ENCODE measurements at regions of chr22 and their contacts with region 1.

Region 1: DNA sequence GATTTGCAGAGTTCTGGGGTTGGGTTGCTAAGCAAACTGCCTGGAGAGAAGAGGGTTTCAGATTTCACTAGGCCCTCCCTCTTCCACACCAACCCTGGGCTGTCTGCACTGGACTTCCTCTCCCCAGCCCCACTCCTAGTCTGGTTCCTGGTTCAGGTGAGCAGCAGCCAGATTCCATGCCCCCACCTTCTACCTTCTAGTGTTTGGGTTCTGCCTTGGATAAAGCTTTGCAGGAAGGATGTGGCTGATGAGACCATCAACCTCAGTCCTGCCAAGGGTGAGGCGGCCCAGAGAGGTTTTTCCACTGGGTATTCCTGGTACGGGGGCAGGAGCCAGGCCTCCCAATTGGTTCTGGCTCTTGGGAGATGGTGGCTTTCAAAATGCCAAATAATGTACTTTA is 68.3 kb downstream of the BCR start:
- DNase-seq: peak; percentile 53
- ATAC-seq: peak; percentile 64
- H3K4me3 ChIP-seq: no peak overlapping the region
- H3K27ac ChIP-seq: no peak overlapping the region
- H3K4me1 ChIP-seq: peaks cover 85% of the 10 kb centered on the region
- H3K27me3 ChIP-seq: no peaks in the 10 kb centered on the region
- CTCF ChIP-seq: no peak
- EP300 ChIP-seq: no peak
- POLR2A ChIP-seq: no peak
- RAD21 ChIP-seq: no peak

Region 2: DNA sequence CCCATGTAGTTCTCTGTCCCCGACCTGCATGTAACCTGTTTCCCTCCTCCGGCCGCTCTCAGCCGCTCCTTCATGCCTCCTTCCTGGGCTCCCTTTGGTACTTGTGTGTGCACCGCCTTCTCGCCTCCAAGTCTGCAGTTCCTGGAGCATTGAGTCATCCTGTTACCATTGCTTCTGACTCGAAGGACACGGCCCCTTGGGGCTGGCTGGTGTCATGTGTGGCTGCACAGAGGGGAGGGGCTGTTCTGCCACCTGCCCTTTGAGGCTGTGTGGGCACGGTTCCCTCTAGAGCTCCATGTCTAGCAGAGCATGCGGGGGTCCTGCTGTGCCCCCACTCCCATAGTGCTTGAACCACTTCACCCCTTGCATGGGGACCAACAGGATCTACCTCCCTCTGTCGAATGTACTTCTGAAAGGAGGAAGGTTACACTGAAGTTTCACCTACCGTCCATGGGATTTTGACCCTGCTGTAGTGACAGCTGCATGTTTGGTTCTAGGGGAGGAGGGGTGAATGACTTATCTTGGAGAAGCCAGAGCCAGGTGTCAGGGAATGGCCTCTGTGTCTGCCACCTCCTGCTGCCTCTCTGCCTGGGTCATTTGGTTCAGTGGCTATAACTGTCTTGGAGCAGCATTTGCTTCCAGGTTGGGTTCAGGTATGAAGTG is 28.6 kb before region 1 on chr22:
- CTCF ChIA-PET with region 1: no interaction called
- POLR2A ChIA-PET with region 1: no interaction called
- in situ Hi-C with region 1: no loop called
- intact Hi-C with region 1: loop called (anchors 5 kb)
- DNase-seq: no peak
- ATAC-seq: no peak
- H3K4me3 ChIP-seq: no peak overlapping the region
- H3K27ac ChIP-seq: no peak overlapping the region
- H3K4me1 ChIP-seq: peaks cover 85% of the 10 kb centered on the region
- H3K27me3 ChIP-seq: no peaks in the 10 kb centered on the region
- CTCF ChIP-seq: no peak
- EP300 ChIP-seq: no peak
- POLR2A ChIP-seq: no peak
- RAD21 ChIP-seq: no peak

Region 3: DNA sequence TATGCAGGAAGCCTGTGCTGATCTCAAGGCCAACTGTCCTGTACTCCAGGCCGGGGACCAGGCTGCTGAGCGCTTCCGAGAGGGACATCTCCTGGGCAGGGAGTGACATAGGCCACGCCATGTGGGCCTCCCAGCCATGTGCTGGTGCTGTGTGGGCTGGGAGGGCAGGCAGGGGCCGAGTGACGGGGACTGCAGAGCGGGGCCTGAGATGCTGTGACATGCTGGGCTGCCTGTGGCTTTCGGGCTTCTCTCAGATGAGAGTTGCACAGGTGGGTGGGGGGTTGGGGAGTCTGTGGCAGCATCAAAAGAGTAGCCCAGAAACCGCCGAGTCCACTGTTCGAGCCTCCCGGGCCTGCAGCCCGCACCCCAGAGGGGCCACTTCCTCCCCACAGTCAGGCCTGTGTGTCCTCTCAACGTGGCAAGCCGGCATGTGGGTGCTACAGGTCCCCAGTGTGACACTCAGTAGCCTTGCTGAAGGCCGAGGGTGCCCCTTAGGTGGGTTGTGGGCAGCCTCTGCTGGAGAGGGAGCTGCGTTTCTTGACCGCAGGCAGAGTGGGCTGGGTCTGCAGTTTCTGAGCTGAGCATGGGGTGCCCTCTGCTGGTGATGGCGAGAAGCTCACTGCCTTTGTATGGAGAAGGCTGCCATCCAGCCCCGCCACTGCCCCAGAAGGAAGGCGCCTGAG is 33.0 kb after region 1 on chr22:
- CTCF ChIA-PET with region 1: no interaction called
- POLR2A ChIA-PET with region 1: no interaction called
- in situ Hi-C with region 1: no loop called
- intact Hi-C with region 1: loop called (anchors 5 kb)
- DNase-seq: peak; percentile 66
- ATAC-seq: peak; percentile 75
- H3K4me3 ChIP-seq: no peak overlapping the region
- H3K27ac ChIP-seq: no peak overlapping the region
- H3K4me1 ChIP-seq: peaks cover 38% of the 10 kb centered on the region
- H3K27me3 ChIP-seq: no peaks in the 10 kb centered on the region
- CTCF ChIP-seq: peak; percentile 98
- EP300 ChIP-seq: no peak
- POLR2A ChIP-seq: no peak
- RAD21 ChIP-seq: peak; percentile 96